Right lobe of liver (tissue), 6 donors: ENCODE measurements at regions of chr2 and their contacts with region 1.

Region 1: DNA sequence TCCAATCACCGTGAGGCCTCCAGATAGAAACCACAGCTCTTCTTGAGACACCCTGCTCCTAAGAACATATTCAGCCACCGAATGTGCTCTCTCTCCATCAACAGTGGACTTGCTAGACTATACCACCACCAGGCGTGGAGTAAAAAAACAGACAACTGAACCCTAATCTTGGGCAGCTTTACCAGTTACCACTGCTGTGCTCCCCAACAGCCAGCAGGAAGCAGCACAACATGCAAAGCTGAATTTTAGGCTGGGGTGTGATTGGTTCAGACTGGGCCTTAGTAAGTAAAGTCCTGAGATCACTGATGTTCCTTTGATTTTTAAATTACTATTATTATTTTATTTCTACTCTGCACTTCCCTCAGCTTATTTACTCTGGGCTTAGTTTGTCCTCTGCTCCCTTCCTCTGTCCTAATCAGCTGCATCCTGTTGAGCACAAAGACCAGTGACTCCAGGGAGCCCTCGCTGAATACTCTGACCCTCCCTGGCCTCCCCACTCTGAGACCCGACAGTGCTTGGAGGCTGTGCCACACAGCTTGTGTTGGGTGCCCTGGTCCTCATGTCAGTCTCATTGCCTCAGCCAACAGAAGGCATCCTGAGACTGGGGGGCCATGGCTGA is 21.9 kb downstream of the MRPL35 start:
- DNase-seq: no peak
- ATAC-seq: peak; percentile 62 to 79 (median 69)
- H3K4me3 ChIP-seq: no peak overlapping the region
- H3K27ac ChIP-seq: no peak overlapping the region
- H3K4me1 ChIP-seq: no peaks in the 10 kb centered on the region
- H3K27me3 ChIP-seq: no peaks in the 10 kb centered on the region
- CTCF ChIP-seq: peak; percentile 77 to 88 (median 86)
- POLR2A ChIP-seq: no peak

Region 2: GRCh38 chr2:86358957-86359356 is 137.8 kb after region 1 on chr2:
- intact Hi-C with region 1: loop called in 1 of 2 experiments (anchors 10 kb)
- DNase-seq: no peak
- ATAC-seq: peak in 2 of 4 donors; percentile 26 to 53
- H3K4me3 ChIP-seq: no peak overlapping the region
- H3K27ac ChIP-seq: no peak overlapping the region
- H3K4me1 ChIP-seq: peaks cover 0 to 6% (median 0%) of the 10 kb centered on the region in 4 donors
- H3K27me3 ChIP-seq: no peaks in the 10 kb centered on the region
- CTCF ChIP-seq: no peak
- POLR2A ChIP-seq: no peak

Region 3: GRCh38 chr2:86368161-86368824 is 147.1 kb after region 1 on chr2:
- intact Hi-C with region 1: loop called in 1 of 2 experiments (anchors 5 kb)
- DNase-seq: peak in 1 of 3 donors; percentile 40
- ATAC-seq: peak; percentile 60 to 74 (median 68)
- H3K4me3 ChIP-seq: peak overlapping the region in 2 of 3 donors; percentile 24 to 38
- H3K27ac ChIP-seq: peak overlapping the region in 1 of 3 donors; percentile 33
- H3K4me1 ChIP-seq: peaks cover 0 to 26% (median 8%) of the 10 kb centered on the region in 4 donors
- H3K27me3 ChIP-seq: no peaks in the 10 kb centered on the region
- CTCF ChIP-seq: peak; percentile 24 to 66 (median 62)
- POLR2A ChIP-seq: no peak